Heart right ventricle (tissue), 16 donors: ENCODE measurements at regions of chr10 and their contacts with region 1.

Region 1: DNA sequence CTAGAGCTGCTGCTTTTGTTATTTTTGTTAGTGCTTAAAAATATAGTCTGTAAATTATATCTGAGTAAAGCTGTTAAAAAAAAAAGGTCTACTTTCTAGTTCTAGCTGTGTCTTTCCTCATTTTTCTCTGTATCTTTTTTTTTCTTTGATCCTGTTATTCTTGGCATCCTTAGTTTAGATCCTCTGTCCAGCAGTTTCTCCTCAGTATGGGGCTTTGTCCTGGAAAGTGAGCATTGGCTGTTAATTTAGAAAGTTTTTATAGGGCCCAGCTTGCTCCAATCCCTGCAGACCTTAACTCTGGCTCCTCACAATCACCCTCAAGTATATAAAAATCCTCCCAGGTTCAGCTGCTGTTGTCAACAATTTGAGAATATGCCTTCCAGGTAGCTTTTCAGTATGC is 23.5 kb downstream of the DDX50 start:
- DNase-seq: no peak
- ATAC-seq: no peak
- H3K4me3 ChIP-seq: no peak overlapping the region
- H3K27ac ChIP-seq: peak overlapping the region in 1 of 10 donors; percentile 8
- H3K4me1 ChIP-seq: peaks cover 0 to 10% (median 0%) of the 10 kb centered on the region in 9 donors
- H3K27me3 ChIP-seq: no peaks in the 10 kb centered on the region
- CTCF ChIP-seq: no peak

Region 2: GRCh38 chr10:68742397-68742796 is 182.2 kb before region 1 on chr10:
- intact Hi-C with region 1: loop called in 1 of 10 experiments (anchors 10 kb)
- DNase-seq: no peak
- ATAC-seq: no peak
- H3K4me3 ChIP-seq: no peak overlapping the region
- H3K27ac ChIP-seq: no peak overlapping the region
- H3K4me1 ChIP-seq: no peaks in the 10 kb centered on the region
- H3K27me3 ChIP-seq: no peaks in the 10 kb centered on the region
- CTCF ChIP-seq: no peak

Region 3: GRCh38 chr10:68784476-68784875 is 140.1 kb before region 1 on chr10:
- intact Hi-C with region 1: loop called in 1 of 10 experiments (anchors 10 kb)
- DNase-seq: no peak
- ATAC-seq: no peak
- H3K4me3 ChIP-seq: no peak overlapping the region
- H3K27ac ChIP-seq: no peak overlapping the region
- H3K4me1 ChIP-seq: no peaks in the 10 kb centered on the region
- H3K27me3 ChIP-seq: no peaks in the 10 kb centered on the region
- CTCF ChIP-seq: no peak

Region 4: DNA sequence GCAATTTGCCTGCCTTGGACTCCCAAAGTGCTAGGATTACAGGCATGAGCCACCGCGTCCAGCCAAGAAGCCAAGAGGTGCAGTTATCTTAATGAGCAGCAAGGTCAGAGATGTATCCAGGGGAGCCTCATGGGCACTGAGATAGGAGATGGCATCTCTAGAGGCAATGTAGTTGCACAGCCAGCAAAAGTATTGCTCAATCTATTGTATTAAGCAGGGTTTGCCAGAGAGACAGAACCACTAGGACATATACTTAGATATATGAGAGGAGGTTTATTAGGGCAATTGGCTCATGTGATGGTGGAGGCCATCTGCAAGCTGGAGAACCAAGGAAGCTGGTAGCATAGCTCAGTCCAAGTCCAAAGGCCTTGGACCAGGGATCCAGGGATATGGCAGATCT is 183.1 kb after region 1 on chr10:
- intact Hi-C with region 1: no loop called
- DNase-seq: no peak
- ATAC-seq: no peak
- H3K4me3 ChIP-seq: no peak overlapping the region
- H3K27ac ChIP-seq: no peak overlapping the region
- H3K4me1 ChIP-seq: peaks cover 0 to 11% (median 0%) of the 10 kb centered on the region in 9 donors
- H3K27me3 ChIP-seq: no peaks in the 10 kb centered on the region
- CTCF ChIP-seq: no peak